Mammary epithelial cell (primary cell): ENCODE measurements at regions of chr5 and their contacts with region 1.

Region 1: GRCh38 chr5:121949867-121950266 is 11.9 kb upstream of the SRFBP1 start:
- DNase-seq: peak; percentile 30
- H3K4me3 ChIP-seq: no peak overlapping the region
- H3K27ac ChIP-seq: no peak overlapping the region
- H3K4me1 ChIP-seq: no peaks in the 10 kb centered on the region
- H3K27me3 ChIP-seq: no peaks in the 10 kb centered on the region
- CTCF ChIP-seq: peak; percentile 65 to 75

Region 2: DNA sequence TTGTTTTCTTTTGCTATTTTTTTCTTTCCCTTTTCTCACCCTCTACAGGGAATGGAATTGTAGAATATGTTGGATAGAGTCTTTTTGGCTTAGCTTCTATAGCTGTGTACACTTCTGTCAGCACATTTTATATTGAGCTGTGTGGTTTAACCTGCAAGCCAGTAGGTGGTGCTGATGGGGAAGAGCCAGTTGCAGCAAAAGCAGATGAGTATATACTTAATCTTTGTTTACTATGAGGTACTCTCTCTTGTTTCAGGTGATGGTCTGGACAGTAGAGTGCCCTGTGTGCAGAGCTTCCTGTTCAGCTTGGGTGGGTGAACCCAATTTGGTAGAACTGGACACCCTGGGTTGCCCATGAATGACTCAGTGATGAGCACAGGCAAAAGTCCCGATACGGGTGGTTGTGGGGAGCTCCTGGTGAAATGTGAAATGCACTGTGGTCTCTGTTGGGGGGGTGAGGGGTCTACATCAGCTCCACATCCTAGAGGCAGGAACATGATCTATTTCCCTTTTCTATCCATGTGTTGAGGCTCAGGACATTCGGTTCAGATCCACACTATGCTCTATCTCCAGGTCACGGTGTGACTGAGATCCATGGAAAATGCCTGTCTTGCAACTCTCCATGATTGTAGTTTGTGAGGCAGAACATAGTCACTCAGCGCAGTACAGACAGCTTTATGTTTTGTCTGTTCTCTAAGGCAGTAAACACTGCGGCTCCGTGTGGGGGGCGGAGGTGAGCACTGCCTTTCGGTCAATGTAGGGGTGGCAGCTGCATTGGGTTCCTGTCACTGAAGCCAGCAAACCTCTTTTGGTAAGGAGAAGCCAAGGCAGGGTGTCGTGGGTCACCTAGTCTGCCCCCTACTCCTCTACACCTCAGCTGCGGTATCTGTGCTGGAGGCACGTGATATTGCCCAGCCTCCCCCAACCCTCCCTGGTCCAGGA is 1132.6 kb before region 1 on chr5:
- CTCF ChIA-PET with region 1: no interaction called
- dilution Hi-C with region 1: no loop called
- in situ Hi-C with region 1: loop called in 1 of 2 experiments (anchors 25 kb)
- intact Hi-C with region 1: loop called (anchors 5 kb)
- DNase-seq: peak; percentile 5
- H3K4me3 ChIP-seq: no peak overlapping the region
- H3K27ac ChIP-seq: no peak overlapping the region
- H3K4me1 ChIP-seq: no peaks in the 10 kb centered on the region
- H3K27me3 ChIP-seq: no peaks in the 10 kb centered on the region
- CTCF ChIP-seq: peak; percentile 34 to 69